ENCODE measurements at regions of chr3 and their contacts with region 1.

Region 1: DNA sequence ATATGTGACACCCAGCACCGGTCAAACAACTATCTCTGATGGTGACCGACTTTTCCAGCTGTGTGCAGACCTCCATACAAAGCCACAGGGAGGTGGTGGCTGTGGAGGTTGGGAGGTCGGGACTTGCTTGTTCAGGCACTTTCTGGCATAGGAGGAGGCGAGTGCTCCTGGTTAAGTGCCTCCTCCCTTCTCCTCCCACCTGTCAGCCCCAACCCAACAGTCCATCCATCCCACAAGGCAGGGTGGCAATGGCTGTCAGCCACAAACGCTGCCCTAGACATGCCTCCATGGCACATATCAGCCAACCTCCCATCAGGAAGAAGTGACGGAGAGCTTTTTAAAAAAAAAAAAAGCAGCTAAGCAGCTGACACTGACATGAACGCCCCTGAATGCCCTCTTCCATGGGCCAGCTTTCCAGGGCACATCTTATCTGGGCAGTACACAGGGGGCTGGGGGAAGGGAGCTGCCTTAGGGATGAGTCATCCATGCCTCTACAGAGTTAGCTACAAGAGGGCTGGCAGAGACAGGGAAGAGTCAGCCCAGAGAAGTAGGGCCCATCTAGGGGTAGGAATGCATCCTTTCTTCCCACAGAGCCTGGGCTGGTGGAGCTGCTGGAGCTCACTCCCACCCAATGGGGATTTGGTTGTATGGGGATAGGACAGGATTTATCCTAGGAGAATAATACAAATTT is 41.2 kb downstream of the CCDC12 start:
- DNase-seq: peak; percentile 89
- H3K4me3 ChIP-seq: no peak overlapping the region
- CTCF ChIP-seq: peak; percentile 89

Region 2: DNA sequence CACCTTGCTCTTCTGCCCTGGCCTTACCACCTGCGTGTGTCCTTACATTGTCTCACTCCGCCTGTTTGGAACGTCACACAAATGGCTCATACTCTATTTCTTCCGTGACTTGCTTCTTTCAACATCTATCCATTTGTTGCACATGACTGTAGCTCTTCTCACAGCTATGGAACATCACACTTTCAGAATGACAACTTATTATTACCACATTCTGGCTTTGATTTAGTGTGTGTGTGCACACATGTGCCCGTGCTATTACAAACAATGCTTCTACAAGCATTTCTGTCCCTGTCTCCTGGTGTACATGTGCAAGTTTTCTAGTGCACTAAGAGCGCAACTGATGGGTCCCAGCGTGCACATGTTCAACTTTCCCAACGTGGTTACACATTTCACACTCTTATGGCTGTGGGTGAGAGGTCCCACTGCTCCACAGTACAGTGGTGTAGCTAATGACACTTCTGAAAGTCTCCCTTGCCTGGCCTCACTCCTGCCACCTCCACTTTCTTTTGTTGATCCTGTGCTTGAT is 20.0 kb before region 1 on chr3:
- CTCF ChIA-PET with region 1: interaction called, 130 read pairs
- POLR2A ChIA-PET with region 1: interaction called, 4 read pairs
- DNase-seq: no peak
- H3K4me3 ChIP-seq: no peak overlapping the region
- CTCF ChIP-seq: no peak

Region 3: DNA sequence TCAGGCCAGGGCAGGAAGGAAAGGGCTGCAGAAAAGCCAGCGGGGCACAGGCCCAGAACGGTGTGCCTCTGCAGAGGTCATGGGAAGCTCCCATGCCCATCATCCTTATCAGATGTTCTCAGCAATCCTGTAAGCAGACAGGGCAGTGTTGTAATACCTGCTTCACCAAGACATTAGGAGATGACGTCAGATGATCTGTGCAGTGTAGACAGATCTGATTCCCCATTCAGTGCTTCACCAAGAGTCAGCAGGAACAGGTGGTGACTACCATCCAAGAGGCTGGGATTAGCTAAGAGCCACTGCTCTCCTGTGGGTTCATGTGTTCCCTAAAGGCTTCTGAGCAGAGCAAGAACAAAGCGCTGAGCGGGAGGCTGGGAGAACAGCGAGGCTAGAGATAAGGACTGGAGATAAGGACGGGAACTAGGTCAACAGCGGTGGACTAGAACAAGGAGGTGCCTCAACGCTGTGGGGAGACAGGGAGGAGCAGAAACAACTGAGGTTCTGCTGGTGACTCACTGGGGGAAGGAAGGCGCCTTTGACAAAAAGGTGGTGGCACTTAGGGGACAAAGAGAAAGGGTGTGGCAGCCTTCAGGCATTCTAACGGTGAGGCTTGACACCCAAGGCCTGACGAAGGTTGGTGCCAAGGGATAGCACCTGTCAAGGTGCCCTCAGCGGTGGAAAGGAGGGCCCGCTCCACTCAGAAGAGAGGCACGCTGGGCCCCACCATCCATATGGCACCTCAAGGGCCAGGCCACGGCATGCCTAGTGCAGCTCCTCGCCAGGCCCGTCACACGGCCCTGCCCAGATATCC is 12.9 kb after region 1 on chr3:
- CTCF ChIA-PET with region 1: interaction called, 59 read pairs
- POLR2A ChIA-PET with region 1: interaction called, 3 read pairs
- DNase-seq: no peak
- H3K4me3 ChIP-seq: no peak overlapping the region
- CTCF ChIP-seq: no peak

Region 4: GRCh38 chr3:46960081-46960701 is 24.9 kb after region 1 on chr3:
- CTCF ChIA-PET with region 1: interaction called, 26 read pairs
- POLR2A ChIA-PET with region 1: interaction called, 3 read pairs
- DNase-seq: no peak
- H3K4me3 ChIP-seq: no peak overlapping the region
- CTCF ChIP-seq: no peak

Region 5: GRCh38 chr3:47324278-47324865 is 389.1 kb after region 1 on chr3:
- CTCF ChIA-PET with region 1: interaction called, 20 read pairs
- POLR2A ChIA-PET with region 1: no interaction called
- DNase-seq: no peak
- H3K4me3 ChIP-seq: no peak overlapping the region
- CTCF ChIP-seq: peak; percentile 74